Activated CD4-positive, alpha-beta memory T cell treated with anti-CD3 and anti-CD28 coated beads, Interleukin-2, amount 10 ng/mL, durations not matched to agents 7 days and 5 days (primary cell): ENCODE measurements at regions of chr20 and their contacts with region 1.

Region 1: GRCh38 chr20:9407805-9408421 is 106.5 kb upstream of the LAMP5 start:
- DNase-seq: peak; percentile 45
- H3K4me3 Mint-ChIP-seq: no peak overlapping the region
- H3K27ac Mint-ChIP-seq: no peak overlapping the region
- H3K4me1 Mint-ChIP-seq: no peaks in the 10 kb centered on the region
- H3K27me3 Mint-ChIP-seq: no peaks in the 10 kb centered on the region

Region 2: GRCh38 chr20:9602847-9603183 is 194.9 kb after region 1 on chr20:
- CTCF ChIA-PET with region 1: interaction called, 70 read pairs
- POLR2A ChIA-PET with region 1: no interaction called
- DNase-seq: no peak
- H3K4me3 Mint-ChIP-seq: no peak overlapping the region
- H3K27ac Mint-ChIP-seq: no peak overlapping the region
- H3K4me1 Mint-ChIP-seq: no peaks in the 10 kb centered on the region
- H3K27me3 Mint-ChIP-seq: no peaks in the 10 kb centered on the region

Region 3: GRCh38 chr20:9609887-9610502 is 202.1 kb after region 1 on chr20:
- CTCF ChIA-PET with region 1: interaction called, 70 read pairs
- POLR2A ChIA-PET with region 1: no interaction called
- DNase-seq: peak; percentile 58
- H3K4me3 Mint-ChIP-seq: no peak overlapping the region
- H3K27ac Mint-ChIP-seq: no peak overlapping the region
- H3K4me1 Mint-ChIP-seq: no peaks in the 10 kb centered on the region
- H3K27me3 Mint-ChIP-seq: peaks cover 7% of the 10 kb centered on the region